ENCODE measurements at regions of chr15 and their contacts with region 1.

Region 1: DNA sequence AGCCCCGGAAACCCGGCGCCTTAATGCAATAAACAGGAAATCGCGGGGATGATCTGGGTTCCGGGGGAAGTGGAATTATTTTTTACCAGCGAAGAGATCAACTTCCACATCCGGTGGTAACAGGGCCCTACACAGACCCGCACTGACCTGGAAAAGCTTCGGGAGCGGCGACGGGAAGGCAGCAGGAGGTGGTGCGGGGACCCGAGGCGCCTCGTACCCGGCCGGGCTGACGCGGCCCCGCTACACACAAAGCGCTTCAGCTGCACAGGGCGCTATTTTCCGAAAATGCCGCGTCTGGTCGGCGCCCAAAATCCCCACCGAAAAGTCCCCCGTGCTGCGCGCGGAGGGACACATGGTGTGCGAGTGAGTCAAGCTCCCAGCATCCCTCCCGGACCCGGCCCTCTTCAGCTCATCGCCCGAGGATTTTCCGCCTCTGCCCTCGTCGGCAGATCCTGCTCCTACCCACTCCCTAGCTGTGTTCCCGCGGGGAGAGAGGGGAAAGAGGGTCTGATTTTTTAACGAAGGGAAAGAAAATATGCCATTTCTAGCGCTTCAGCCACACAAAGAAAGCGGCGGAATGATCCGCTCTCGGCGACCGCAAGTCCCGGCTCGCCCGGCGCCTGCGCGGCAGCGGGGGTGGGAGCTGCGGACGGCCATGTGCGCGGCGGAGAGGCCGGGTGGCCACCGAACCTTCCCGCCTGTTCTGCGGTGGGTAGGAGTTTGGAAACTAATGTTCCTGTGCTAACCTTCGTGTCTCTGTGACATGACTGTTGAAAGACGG is at the start of gene GABPB1:
- DNase-seq: peak; percentile 83 to 98
- ATAC-seq: peak; percentile 75 to 86
- H3K4me3 ChIP-seq: peak within 1 kb of the TSS; percentile 91
- H3K27ac ChIP-seq: peak within 1 kb of the TSS; percentile 96 to 98
- H3K4me1 ChIP-seq: peaks cover 27% of the 10 kb centered on the region
- CTCF ChIP-seq: no peak
- EP300 ChIP-seq: no peak
- POLR2A ChIP-seq: peak; percentile 97
- RAD21 ChIP-seq: no peak
- polyA plus RNA-seq, gene GABPB1: 53.9 and 55.1 TPM in 2 replicates

Region 2: GRCh38 chr15:50344006-50344464 is 11.0 kb before region 1 on chr15:
- CTCF ChIA-PET with region 1: interaction called, 7 read pairs
- POLR2A ChIA-PET with region 1: interaction called, 15 read pairs
- DNase-seq: no peak
- ATAC-seq: no peak
- H3K4me3 ChIP-seq: no peak overlapping the region
- H3K27ac ChIP-seq: no peak overlapping the region
- H3K4me1 ChIP-seq: no peaks in the 10 kb centered on the region; the same call in 2 of the 3 replicates
- CTCF ChIP-seq: no peak
- EP300 ChIP-seq: no peak
- POLR2A ChIP-seq: no peak
- RAD21 ChIP-seq: no peak

Region 3: DNA sequence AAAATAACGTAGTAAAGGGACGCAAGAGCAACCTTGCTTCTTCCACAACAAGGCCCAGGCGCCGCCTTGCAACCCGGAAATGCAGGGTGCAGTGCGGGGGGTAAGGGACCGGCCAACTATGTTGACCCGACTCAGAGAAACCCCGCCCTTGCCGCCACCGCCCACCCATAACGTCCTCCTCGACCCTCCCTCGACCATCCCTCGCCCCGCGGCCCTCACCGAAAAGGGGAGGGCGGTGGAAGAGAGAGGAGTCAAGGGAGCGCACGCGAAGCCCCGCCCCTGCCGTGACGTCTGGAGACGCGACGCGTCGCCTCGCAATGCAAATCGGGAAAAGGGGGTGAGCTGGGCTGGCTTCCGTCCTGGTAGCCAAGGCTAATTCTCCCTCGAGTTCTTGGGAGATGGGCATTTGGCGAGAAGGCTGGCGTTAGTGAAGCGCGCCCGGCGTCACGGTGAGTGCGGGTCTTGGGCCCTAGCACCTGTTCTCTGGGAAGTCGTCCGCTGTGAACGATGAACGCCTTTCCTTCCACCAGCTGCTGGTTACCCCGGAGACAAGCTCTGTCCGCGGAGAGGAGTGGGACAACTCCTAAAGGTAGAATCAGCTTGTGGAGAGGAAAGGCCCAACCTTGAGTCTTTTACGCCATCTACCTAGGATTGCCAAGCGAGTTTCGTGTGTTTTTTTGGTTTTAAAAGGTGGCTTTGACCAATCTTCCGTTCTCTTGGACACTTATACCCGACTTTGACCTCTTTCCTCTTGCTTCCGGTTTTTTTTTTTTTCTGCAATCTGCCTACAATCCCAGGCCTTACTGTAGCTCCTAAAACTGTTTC is 69.2 kb after region 1 on chr15 and contains the start of gene USP8:
- CTCF ChIA-PET with region 1: no interaction called
- POLR2A ChIA-PET with region 1: interaction called, 36 read pairs
- DNase-seq: peak; percentile 89 to 99
- ATAC-seq: peak; percentile 98
- H3K4me3 ChIP-seq: peak within 1 kb of the TSS; percentile 63
- H3K27ac ChIP-seq: peak within 1 kb of the TSS; percentile 80 to 88
- H3K4me1 ChIP-seq: peaks cover 19% of the 10 kb centered on the region; the same call in 2 of the 3 replicates
- CTCF ChIP-seq: no peak
- EP300 ChIP-seq: no peak
- POLR2A ChIP-seq: peak; percentile 92
- RAD21 ChIP-seq: no peak
- polyA plus RNA-seq, gene USP8: 92.9 and 108 TPM in 2 replicates